ENCODE measurements at regions of chr1 and their contacts with region 1.

Region 1: GRCh38 chr1:201828820-201829774 is at the start of gene IPO9:
- DNase-seq: peak; percentile 97
- ATAC-seq: peak; percentile 94
- H3K4me3 Mint-ChIP-seq: peak within 1 kb of the TSS; percentile 99
- H3K27ac Mint-ChIP-seq: peak within 1 kb of the TSS; percentile 98
- H3K4me1 Mint-ChIP-seq: peaks cover 37% of the 10 kb centered on the region
- H3K27me3 Mint-ChIP-seq: no peaks in the 10 kb centered on the region
- total RNA-seq, gene IPO9: 65.1 to 66.0 TPM

Region 2: DNA sequence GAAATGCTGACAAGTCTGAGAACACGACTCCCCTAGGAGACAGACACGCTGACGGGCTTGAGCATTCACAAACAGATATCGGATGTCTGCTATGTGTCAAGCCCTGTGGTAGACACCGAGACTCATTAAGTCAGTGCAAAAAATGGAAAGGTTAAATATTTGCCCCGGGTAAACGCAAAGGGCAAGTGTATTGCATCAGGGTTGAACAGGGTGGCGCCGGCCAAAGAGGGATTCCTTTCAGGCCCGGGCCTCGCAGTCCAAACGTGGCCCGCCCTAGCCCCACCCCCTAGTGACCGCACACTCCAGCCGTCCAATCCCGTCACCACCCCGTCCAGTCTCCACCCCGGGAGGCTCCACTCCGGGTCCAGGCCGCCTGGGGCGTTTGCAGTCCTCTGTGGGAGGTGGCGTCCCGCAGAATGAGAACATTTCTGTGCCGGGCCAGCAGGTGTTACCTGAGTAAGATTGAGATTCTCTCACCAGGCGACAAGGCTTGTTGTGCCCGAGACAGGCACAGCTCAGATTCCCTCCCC is 658.5 kb before region 1 on chr1:
- CTCF ChIA-PET with region 1: no interaction called
- POLR2A ChIA-PET with region 1: no interaction called
- intact Hi-C with region 1: loop called in 1 of 2 experiments (anchors 2 kb)
- DNase-seq: peak; percentile 92
- ATAC-seq: peak; percentile 83
- H3K4me3 Mint-ChIP-seq: peak overlapping the region; percentile 71
- H3K27ac Mint-ChIP-seq: peak overlapping the region; percentile 90
- H3K4me1 Mint-ChIP-seq: peaks cover 21% of the 10 kb centered on the region
- H3K27me3 Mint-ChIP-seq: peaks cover 15% of the 10 kb centered on the region

Region 3: DNA sequence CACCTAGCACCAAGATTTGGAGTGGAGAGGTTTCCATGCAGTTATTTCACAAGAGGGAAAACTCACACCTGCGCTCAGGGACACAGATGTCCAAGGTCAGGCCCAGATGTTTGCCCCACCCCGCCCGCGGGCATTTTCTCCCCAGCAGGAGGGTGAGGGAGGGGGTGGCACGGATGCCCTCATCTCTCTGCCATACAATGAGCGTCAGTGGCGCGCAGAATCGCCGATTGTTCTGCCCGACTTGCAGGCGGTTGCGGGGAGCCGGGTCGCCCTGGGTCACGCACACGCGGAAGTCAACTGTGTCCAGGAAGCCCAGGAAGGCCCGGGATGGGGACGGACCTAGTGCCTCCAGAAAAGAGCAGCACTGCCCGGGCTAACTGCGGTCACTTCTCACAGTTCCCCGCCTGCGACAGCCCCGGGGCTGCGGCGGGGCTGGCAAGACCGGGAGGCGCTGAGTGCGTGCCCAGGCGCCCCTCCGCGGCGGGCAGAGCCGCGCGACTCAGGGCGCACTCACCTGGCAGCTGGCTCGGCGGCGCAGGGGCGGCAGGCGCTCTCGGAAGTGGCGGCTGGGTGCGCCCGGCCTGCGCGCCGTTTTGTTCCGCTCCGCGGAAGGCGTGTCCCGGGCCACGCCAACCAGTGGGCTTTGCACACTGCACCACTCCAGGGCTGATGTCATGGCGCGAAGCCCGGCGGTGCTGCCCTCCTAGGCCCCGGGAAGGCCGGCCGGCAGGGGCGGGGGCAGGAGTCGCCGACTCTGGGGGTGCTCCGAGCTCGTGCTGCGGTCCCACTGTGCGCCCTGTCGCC is 322.3 kb before region 1 on chr1 and contains the start of gene CSRP1:
- CTCF ChIA-PET with region 1: no interaction called
- POLR2A ChIA-PET with region 1: no interaction called
- intact Hi-C with region 1: loop called in 1 of 2 experiments (anchors 1 kb)
- DNase-seq: peak; percentile 92
- ATAC-seq: peak; percentile 94
- H3K4me3 Mint-ChIP-seq: peak within 1 kb of the TSS; percentile 91
- H3K27ac Mint-ChIP-seq: peak within 1 kb of the TSS; percentile 89
- H3K4me1 Mint-ChIP-seq: peaks cover 31% of the 10 kb centered on the region
- H3K27me3 Mint-ChIP-seq: no peaks in the 10 kb centered on the region
- total RNA-seq, gene CSRP1: 49.2 to 50.7 TPM

Region 4: DNA sequence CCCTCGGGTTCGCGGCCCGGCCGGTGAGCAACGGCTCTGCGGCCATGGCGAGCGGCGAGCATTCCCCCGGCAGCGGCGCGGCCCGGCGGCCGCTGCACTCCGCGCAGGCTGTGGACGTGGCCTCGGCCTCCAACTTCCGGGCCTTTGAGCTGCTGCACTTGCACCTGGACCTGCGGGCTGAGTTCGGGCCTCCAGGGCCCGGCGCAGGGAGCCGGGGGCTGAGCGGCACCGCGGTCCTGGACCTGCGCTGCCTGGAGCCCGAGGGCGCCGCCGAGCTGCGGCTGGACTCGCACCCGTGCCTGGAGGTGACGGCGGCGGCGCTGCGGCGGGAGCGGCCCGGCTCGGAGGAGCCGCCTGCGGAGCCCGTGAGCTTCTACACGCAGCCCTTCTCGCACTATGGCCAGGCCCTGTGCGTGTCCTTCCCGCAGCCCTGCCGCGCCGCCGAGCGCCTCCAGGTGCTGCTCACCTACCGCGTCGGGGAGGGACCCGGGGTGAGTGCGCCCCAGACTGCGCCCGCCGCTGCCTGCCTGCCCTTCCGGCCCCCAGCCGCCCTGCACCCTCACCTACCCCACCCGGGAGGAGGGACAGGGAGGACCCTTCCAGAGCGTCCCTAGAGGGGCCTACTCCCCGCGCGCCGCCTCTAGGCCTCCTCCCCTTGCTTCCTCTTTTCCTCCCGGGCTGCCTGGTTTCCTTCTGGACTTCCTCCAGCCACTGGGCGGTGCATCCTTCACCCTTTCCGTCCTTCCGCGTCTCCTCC is 153.7 kb after region 1 on chr1 and contains the start of gene RNPEP:
- CTCF ChIA-PET with region 1: no interaction called
- POLR2A ChIA-PET with region 1: no interaction called
- intact Hi-C with region 1: loop called in 1 of 2 experiments (anchors 1 kb)
- DNase-seq: peak; percentile 69
- ATAC-seq: peak; percentile 82
- H3K4me3 Mint-ChIP-seq: peak within 1 kb of the TSS; percentile 86
- H3K27ac Mint-ChIP-seq: peak within 1 kb of the TSS; percentile 80
- H3K4me1 Mint-ChIP-seq: peaks cover 16% of the 10 kb centered on the region
- H3K27me3 Mint-ChIP-seq: no peaks in the 10 kb centered on the region
- total RNA-seq, gene RNPEP: 44.9 to 49.2 TPM

Region 5: DNA sequence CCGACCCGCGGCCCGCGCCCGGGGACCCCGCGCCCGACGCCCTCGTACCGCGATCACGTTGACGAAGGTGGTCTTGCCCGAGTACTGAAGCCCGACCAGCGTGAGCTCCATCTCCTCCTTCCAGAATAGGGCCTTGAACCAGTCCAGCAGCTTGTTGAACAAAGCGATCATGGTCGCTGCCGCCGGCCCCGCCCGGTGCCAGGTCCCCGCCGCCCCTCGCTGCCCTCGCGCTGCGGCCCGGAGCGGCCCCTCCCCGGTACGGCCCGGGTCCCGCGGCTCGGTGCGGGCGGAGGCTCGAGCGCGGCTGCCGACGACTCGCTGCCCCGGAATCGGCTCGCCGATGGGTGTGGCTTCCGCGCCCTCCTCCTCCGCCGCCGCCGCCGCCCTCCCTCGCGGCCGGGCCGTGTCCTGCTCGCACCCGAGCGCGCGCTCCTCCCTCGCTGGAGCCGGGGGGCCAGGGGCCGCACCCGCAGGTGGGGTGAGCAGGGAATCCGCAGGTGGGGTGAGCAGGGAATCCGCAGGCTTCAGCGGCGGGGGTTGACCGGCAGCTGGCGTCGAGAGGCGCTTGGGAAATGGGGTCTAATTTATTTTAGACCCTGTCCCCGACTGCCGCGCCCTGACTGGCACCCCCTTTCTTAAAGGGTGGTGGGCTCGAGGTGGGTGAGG is 315.4 kb after region 1 on chr1 and contains the start of gene ARL8A:
- CTCF ChIA-PET with region 1: no interaction called
- POLR2A ChIA-PET with region 1: no interaction called
- intact Hi-C with region 1: loop called in 1 of 2 experiments (anchors 1 kb)
- DNase-seq: peak; percentile 83
- ATAC-seq: peak; percentile 68
- H3K4me3 Mint-ChIP-seq: peak within 1 kb of the TSS; percentile 95
- H3K27ac Mint-ChIP-seq: peak within 1 kb of the TSS; percentile 92
- H3K4me1 Mint-ChIP-seq: peaks cover 31% of the 10 kb centered on the region
- H3K27me3 Mint-ChIP-seq: no peaks in the 10 kb centered on the region
- total RNA-seq, gene ARL8A: 32.3 to 51.7 TPM

Region 6: GRCh38 chr1:202160377-202160940 is 331.4 kb after region 1 on chr1 and contains the start of gene PTPN7:
- CTCF ChIA-PET with region 1: interaction called, 6 read pairs
- POLR2A ChIA-PET with region 1: no interaction called
- intact Hi-C with region 1: loop called in 1 of 2 experiments (anchors 1 kb)
- DNase-seq: peak; percentile 98
- ATAC-seq: peak; percentile 69
- H3K4me3 Mint-ChIP-seq: peak within 1 kb of the TSS; percentile 97
- H3K27ac Mint-ChIP-seq: peak within 1 kb of the TSS; percentile 99
- H3K4me1 Mint-ChIP-seq: peaks cover 80% of the 10 kb centered on the region
- H3K27me3 Mint-ChIP-seq: no peaks in the 10 kb centered on the region
- total RNA-seq, gene PTPN7: 188 to 221 TPM